ENCODE measurements at regions of chr15 and their contacts with region 1.

Region 1: DNA sequence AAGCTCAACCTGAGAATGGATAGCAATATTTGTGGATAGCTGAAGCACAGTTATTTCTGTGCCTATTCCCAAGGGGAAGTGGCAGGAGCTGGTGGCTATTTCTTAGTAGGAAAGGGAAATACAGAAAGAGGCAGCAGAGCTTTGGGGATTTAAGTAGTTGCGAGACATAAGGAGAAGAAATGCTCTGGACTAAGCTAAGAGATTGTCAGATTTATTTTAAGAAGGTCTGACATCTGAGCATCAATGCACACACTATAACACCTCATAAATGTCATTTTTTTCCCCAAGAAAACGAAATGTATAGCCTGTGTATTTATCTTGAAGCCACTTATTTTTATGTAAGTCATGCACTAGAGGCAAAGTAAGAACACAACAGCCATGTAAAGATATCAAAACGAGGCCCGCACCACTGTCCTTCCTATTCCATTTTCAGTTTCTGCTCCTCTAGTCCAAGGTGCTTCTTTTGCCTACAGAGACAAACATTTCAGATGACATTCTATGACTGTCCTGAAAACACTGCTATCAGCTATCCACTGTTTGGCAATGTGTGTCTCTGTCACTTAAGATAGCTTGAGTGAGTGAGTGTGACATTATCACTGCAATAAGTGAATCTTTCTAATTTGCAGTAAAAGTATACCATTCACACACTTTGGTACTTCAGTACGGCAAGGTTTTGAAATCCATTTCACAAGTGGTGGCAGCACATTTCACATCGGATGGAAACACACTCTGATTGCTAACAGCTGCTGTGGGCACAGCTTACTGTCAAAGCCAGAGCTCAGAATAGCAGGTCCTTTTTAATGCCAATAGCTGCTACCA is 62.7 kb upstream of the ICE2 start:
- DNase-seq: no peak
- ATAC-seq: peak; percentile 66

Region 2: GRCh38 chr15:60576044-60576443 is 34.4 kb after region 1 on chr15:
- intact Hi-C with region 1: loop called (anchors 5 kb)
- DNase-seq: no peak
- ATAC-seq: peak; percentile 51

Measured in Right ventricle myocardium inferior (tissue), 1 donor.